OCI-LY7 (cell line): ENCODE measurements at regions of chr4 and their contacts with region 1.

Region 1: DNA sequence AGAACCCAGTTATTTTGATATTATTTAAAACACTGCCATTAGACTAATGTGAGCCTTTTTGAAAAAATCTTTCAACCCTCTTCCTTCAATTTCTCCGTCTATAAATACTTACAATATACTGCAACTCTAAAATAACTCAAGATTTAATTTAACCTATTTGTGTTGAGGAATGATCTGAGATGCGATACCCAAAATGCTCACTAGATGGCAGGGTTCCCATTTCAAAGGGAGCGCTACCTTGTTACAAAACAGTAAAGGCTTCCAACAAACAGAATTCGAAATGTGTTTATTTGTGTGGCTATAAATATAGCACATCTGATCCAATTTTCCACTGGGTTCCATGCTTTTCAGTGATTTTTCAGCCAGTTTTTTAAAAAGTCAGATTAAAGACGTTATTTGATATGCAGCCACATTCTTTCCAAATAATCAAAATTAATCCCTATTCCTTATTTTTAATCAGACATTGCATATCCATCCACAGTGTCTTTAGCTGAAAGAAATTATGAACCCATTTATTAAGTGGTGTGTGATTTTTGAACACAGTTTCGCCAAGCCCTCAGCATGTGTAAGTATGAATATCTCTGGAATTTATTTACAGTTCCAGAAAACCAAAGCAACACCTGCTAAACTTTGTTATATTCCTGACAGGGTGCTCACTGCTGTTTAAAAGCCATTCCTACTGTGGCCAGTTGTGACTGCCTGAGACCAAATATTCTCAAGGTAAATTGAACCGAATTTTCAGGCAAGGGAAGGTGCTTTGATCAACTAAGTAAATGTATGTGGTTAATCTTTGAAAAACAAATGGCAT is 668.0 kb upstream of the LCORL start:
- DNase-seq: peak; percentile 71
- H3K4me3 ChIP-seq: no peak overlapping the region
- H3K27ac ChIP-seq: no peak overlapping the region
- H3K4me1 ChIP-seq: peaks cover 29% of the 10 kb centered on the region
- CTCF ChIP-seq: peak; percentile 98

Region 2: DNA sequence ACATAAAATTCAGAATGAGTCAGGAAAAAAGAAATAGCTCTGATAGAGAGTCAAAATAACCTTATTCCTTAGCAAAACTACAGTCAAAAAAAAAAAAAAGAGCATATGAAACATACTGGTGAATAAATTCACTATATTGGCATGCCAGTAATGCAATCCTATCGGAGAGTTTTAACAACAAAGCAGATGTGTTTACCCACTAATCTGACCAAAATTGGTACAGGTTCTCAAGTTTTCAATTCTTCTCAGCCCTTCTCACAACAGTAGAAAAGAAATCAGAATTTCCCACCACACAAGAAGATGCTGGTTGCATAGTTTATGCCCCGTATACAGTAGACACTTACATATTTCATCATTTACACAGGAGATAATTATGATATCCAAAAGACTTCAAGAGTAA is 727.3 kb before region 1 on chr4:
- CTCF ChIA-PET with region 1: no interaction called
- POLR2A ChIA-PET with region 1: no interaction called
- intact Hi-C with region 1: no loop called
- DNase-seq: no peak
- H3K4me3 ChIP-seq: no peak overlapping the region
- H3K27ac ChIP-seq: no peak overlapping the region
- H3K4me1 ChIP-seq: no peaks in the 10 kb centered on the region
- CTCF ChIP-seq: no peak

Region 3: GRCh38 chr4:18934197-18934596 is 244.7 kb after region 1 on chr4:
- CTCF ChIA-PET with region 1: no interaction called
- POLR2A ChIA-PET with region 1: no interaction called
- intact Hi-C with region 1: loop called (anchors 2 kb)
- DNase-seq: peak; percentile 27
- H3K4me3 ChIP-seq: no peak overlapping the region
- H3K27ac ChIP-seq: no peak overlapping the region
- H3K4me1 ChIP-seq: peaks cover 24% of the 10 kb centered on the region
- CTCF ChIP-seq: peak; percentile 65

Region 4: DNA sequence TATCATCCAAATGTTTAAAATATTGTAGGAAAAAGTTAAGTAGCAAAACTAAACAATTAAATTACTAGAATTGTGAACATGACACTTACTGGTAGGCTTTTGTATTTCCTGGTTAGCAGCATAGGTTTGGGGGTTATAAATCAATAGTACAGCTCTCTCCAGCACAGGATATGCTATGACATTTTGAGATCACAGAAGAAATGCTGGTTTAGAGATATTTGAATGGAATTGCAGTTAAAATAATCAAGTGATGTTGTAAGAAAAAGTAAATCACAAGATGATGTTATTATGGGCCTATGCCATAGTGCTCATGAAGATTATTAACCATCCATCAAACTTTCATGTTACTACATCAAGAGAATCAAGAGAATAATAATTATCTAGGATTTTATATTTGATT is 482.3 kb after region 1 on chr4:
- CTCF ChIA-PET with region 1: no interaction called
- POLR2A ChIA-PET with region 1: no interaction called
- intact Hi-C with region 1: loop called (anchors 5 kb)
- DNase-seq: no peak
- H3K4me3 ChIP-seq: no peak overlapping the region
- H3K27ac ChIP-seq: no peak overlapping the region
- H3K4me1 ChIP-seq: no peaks in the 10 kb centered on the region
- CTCF ChIP-seq: no peak

Region 5: DNA sequence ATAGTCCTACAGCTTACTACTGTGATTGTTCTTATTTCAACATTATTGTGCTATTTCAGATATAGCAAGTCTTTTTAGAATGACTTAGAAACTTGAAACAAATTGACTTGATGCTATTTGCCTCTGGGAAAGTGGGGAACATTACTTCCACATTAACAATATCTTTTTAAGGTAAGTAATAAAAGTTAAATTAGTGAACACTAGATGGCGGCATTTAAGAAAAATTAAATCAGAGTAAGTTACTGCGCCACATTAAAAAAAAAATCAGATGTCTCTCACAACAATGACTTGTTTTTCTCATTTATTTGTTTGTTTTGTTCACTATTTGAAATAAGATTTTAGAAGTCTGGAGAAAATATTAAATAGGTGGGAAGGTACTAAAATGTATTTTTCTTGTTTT is 535.3 kb after region 1 on chr4:
- CTCF ChIA-PET with region 1: no interaction called
- POLR2A ChIA-PET with region 1: no interaction called
- intact Hi-C with region 1: loop called (anchors 1 kb)
- DNase-seq: peak; percentile 60
- H3K4me3 ChIP-seq: no peak overlapping the region
- H3K27ac ChIP-seq: no peak overlapping the region
- H3K4me1 ChIP-seq: no peaks in the 10 kb centered on the region
- CTCF ChIP-seq: peak; percentile 83

Region 6: DNA sequence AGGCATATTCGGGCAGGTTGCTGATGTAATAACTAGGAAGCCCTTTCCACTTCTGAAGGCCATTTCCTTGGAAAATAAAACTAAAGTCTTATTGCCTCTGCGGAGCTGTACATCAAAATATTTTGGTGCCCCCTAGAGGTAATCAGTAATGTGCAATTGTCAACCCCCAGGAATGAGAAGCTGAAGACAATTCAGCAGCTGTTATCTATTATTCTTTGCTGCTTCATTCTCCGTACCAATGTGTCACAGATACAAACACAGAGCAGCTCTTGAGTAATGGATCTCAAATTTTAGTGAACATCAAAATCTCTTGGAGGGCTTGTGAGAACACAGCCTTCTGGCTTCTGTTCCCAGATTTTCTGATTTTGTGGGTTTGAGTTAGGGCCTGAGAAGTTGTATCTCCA is 1558.6 kb after region 1 on chr4:
- CTCF ChIA-PET with region 1: no interaction called
- POLR2A ChIA-PET with region 1: no interaction called
- intact Hi-C with region 1: loop called (anchors 5 kb)
- DNase-seq: peak; percentile 40
- H3K4me3 ChIP-seq: no peak overlapping the region
- H3K27ac ChIP-seq: no peak overlapping the region
- H3K4me1 ChIP-seq: no peaks in the 10 kb centered on the region
- CTCF ChIP-seq: peak; percentile 86